Uterus (tissue), 4 donors: ENCODE measurements at regions of chr15 and their contacts with region 1.

Region 1: DNA sequence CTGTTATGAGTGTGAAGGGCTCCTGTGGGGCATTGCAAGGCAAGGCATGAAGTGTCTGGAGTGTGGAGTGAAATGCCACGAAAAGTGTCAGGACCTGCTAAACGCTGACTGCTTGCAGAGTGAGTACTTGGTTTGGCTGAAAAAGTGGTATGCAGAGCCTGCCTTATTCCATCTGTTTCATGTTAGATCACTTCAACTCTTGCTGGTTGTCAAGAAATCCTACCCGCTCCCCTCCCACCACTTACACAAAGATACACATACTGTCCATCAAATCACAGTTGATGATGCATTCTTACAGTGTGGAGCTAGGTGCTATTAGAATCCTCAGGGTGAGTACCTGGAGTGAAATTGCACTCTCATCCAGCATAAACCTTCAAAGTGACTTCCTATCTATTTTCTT is 272.1 kb downstream of the UNC13C start:
- DNase-seq: no peak
- H3K4me3 ChIP-seq: no peak overlapping the region
- H3K27ac ChIP-seq: no peak overlapping the region
- H3K4me1 ChIP-seq: no peaks in the 10 kb centered on the region
- H3K27me3 ChIP-seq: no peaks in the 10 kb centered on the region
- CTCF ChIP-seq: no peak
- POLR2A ChIP-seq: no peak

Region 2: GRCh38 chr15:54197995-54198394 is 52.3 kb before region 1 on chr15:
- intact Hi-C with region 1: loop called (anchors 10 kb)
- DNase-seq: no peak
- H3K4me3 ChIP-seq: no peak overlapping the region
- H3K27ac ChIP-seq: no peak overlapping the region
- H3K4me1 ChIP-seq: no peaks in the 10 kb centered on the region
- H3K27me3 ChIP-seq: no peaks in the 10 kb centered on the region
- CTCF ChIP-seq: no peak
- POLR2A ChIP-seq: no peak